Dendritic cell treated with granulocyte-macrophage colony-stimulating factor and Interleukin-4, amounts not matched to agents 40 ng/mL and 50 ng/mL, for 4 days (primary cell): ENCODE measurements at regions of chr2 and their contacts with region 1.

Region 1: DNA sequence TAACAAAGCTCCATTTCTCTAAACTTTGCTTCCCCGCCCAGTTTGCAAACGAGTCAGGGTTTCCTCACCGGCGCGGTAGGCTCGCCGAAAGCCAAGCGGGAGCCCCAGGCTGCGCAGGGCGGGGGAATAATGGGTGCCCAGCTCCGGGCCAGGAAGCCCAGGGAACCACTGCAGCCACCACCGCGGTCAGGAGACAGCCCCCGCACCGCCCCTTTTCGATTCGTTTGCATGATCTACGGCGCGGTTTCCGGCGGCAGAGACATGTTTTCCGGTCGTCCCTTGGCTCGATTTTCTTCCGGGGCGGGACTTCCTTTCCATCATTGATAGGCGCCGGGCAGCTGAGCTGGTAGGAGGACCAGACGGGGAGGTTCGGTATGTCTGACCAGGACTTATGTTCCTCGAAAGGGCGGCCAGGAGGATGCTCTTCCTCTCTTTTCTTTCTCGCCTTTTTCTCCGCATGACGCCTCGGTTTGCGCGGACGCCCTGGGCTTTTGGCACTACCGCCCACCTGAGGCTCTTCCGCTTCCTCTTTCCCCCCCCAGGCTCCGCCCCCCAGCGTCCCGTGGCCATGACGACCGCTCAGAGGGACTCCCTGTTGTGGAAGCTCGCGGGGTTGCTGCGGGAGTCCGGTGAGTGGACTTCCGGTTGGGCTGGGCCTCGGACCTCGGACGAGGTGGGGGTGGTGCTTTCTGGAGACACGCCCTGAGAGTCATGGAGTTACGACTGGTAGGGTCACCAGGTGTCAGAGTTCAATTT is at the start of gene STK11IP:
- H3K4me3 Mint-ChIP-seq: peak within 1 kb of the TSS; percentile 94
- H3K27ac Mint-ChIP-seq: peak within 1 kb of the TSS; percentile 96
- H3K4me1 Mint-ChIP-seq: peaks cover 42% of the 10 kb centered on the region
- H3K27me3 Mint-ChIP-seq: peaks cover 6% of the 10 kb centered on the region

Region 2: GRCh38 chr2:219402665-219403515 is 194.8 kb before region 1 on chr2:
- intact Hi-C with region 1: loop called (anchors 5 kb)
- H3K4me3 Mint-ChIP-seq: no peak overlapping the region
- H3K27ac Mint-ChIP-seq: peak overlapping the region; percentile 99
- H3K4me1 Mint-ChIP-seq: peaks cover 72% of the 10 kb centered on the region
- H3K27me3 Mint-ChIP-seq: peaks cover 16% of the 10 kb centered on the region

Region 3: GRCh38 chr2:219498280-219499057 is 99.3 kb before region 1 on chr2 and contains the start of gene GMPPA:
- intact Hi-C with region 1: loop called (anchors 5 kb)
- H3K4me3 Mint-ChIP-seq: peak within 1 kb of the TSS; percentile 90
- H3K27ac Mint-ChIP-seq: peak within 1 kb of the TSS; percentile 94
- H3K4me1 Mint-ChIP-seq: peaks cover 40% of the 10 kb centered on the region
- H3K27me3 Mint-ChIP-seq: peaks cover 43% of the 10 kb centered on the region

Region 4: GRCh38 chr2:219543601-219544358 is 54.0 kb before region 1 on chr2 and contains the starts of genes CHPF and TMEM198:
- intact Hi-C with region 1: loop called (anchors 2 kb)
- H3K4me3 Mint-ChIP-seq: peak within 1 kb of the TSS; percentile 76
- H3K27ac Mint-ChIP-seq: peak within 1 kb of the TSS; percentile 39
- H3K4me1 Mint-ChIP-seq: peaks cover 9% of the 10 kb centered on the region
- H3K27me3 Mint-ChIP-seq: peaks cover 79% of the 10 kb centered on the region

Region 5: DNA sequence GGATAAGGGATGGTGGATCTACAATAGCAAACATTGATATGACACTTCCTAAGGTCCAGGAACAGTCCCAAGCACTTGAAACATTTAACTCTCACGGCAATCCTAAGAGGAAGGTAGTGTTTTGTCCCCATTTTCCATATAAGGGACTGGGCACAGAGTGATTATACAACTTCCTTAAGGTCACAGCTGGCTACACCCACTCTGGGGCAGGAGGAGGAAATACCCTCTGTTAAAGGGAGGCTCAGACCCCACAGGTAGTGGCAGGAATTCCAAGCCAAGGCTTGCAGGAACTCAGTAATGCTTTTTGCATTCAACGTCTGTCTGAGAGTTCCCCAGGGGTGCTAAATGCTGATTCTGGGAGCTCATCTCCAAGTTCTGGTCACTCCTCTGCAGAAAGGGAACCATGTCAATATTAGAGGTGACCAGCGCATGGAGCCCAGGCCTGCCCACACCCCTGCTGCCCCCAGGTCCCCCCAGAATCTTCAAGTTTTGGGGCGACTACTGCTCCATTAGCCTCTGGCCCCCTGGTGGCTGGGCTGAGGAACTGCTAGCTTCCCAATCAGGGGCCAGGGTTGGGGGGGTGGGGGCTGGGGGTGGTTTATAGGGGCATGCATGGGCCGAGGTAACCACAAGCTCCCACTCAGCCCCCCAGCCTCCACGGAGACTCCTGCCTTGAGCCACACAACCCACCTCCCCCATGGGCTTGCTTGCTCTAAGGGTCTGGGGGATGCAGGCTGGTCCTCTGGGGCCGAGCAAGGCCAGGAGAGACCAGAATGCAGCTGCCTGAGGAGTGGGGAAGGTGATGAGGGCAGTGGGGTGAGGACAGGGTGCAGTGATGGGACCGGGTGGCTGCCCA is 37.5 kb before region 1 on chr2:
- intact Hi-C with region 1: no loop called
- H3K4me3 Mint-ChIP-seq: no peak overlapping the region
- H3K27ac Mint-ChIP-seq: no peak overlapping the region
- H3K4me1 Mint-ChIP-seq: no peaks in the 10 kb centered on the region
- H3K27me3 Mint-ChIP-seq: no peaks in the 10 kb centered on the region

Region 6: DNA sequence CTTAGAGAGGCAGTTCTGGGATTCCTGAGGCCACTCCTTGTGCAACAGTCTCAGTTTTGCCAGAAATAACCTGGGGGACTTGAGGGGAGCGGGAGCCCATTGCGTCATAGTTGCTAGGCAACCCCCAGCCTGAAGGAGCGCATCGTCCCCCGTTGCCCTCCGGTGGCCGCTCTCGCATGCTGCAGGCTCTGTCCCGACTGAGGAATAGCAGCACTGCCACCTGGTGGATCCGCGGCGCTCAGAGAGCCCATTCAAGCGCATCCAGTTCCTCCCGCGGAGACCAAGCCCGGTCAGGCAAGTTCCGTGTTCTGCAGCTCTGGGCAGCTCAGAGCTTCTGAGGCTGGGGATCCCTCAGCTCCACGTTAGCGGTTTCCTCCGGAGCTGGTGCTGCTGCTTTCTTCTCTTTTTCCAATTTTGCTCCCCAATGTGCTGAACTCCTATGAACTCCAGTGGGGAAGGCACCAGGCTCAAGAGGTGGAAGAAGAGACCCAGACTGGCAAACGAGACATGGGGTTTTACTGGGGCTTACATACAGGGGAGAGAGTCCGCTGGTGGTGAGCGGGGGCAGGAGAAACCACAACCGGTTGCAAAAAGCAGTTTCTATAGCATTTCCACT is 44.8 kb after region 1 on chr2:
- intact Hi-C with region 1: loop called (anchors 5 kb)
- H3K4me3 Mint-ChIP-seq: no peak overlapping the region
- H3K27ac Mint-ChIP-seq: no peak overlapping the region
- H3K4me1 Mint-ChIP-seq: peaks cover 29% of the 10 kb centered on the region
- H3K27me3 Mint-ChIP-seq: peaks cover 26% of the 10 kb centered on the region

Region 7: GRCh38 chr2:219886615-219887014 is 288.9 kb after region 1 on chr2:
- intact Hi-C with region 1: no loop called
- H3K4me3 Mint-ChIP-seq: no peak overlapping the region
- H3K27ac Mint-ChIP-seq: no peak overlapping the region
- H3K4me1 Mint-ChIP-seq: no peaks in the 10 kb centered on the region
- H3K27me3 Mint-ChIP-seq: no peaks in the 10 kb centered on the region